Dorsolateral prefrontal cortex (tissue), 120 donors: ENCODE measurements at regions of chr5 and their contacts with region 1.

Region 1: DNA sequence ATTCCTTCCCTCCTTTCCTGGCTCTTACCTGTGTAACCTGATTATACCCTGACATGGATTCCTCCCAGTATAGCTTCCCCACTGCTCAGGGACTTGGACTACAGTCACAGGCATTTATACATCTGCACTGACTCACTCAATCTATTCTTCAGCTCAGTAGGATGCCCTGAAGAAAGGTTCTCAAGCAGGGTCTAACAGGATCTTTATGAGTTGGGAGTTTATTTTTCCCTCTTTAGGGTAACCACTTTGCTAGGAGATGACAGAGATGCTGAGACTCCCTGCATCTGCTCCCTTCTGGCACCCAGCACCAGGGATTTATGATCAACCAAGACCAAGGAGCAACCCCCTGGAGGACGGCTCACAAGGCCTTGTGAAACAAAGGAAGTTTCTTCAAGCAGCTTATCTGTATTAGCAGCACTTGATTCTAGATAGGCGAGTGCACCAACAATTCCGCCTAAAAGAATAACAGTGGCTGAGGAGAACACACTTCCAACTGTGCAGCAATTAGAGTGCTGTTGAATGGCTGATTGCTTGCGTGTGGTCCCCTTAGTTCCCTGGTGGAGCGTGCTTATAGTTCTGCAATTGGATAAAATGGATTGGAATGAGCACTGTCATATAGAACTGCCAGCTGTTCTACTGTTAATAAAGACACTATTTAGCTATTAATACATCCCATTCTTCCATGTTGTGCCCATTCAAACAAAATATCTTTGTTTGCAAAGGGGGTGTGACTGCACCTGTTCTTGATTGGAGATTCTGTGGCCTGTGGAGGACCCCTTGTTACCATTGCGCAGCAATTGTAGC is 482.6 kb downstream of the ZNF608 start:
- DNase-seq: peak in 3 of 10 donors; percentile 41 to 60 (median 52)
- H3K4me3 ChIP-seq: peak overlapping the region in 4 of 59 donors; percentile 1 to 30 (median 8)
- H3K27ac ChIP-seq: peak overlapping the region in 58 of 59 donors; percentile 80 to 97 (median 92)
- H3K27me3 ChIP-seq: no peaks in the 10 kb centered on the region
- CTCF ChIP-seq: peak in 5 of 56 donors; percentile 5 to 30 (median 12)

Region 2: DNA sequence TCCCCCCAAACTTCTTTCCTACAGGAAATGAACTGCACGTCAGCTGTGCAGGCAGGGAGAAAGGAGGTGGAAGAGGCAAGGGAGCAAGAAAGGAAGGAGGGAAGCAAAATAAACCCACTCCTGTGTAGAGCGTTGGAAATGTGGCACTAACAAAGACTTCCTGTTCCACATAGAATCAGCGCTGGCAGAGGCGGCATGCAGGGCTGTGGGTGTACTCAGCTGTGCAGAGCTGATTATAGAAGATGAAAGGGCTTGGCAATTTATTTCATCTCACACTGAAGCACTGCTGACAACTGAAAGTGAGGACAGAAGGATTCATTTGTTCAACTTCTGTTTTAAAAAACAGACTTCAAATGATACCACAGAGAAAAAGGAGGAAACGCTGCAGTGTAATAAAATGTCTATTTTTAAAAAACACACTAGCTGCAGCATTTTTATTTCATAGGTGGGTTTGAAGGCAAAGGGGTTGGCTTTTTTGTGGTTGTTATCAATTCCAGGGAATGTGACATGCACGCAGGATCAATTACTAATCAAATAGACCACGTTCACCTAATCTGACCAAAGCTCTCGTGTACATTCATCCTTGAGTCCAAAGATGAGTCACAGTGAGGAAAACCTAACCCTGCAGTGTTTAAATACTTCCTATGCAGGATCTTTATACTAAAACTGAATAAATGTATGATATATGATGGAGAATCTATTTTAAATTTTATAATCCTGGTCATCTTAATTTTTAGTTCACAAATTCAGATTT is 100.9 kb before region 1 on chr5:
- intact Hi-C with region 1: no loop called
- DNase-seq: peak; percentile 33 to 92 (median 86)
- H3K4me3 ChIP-seq: peak overlapping the region in 49 of 59 donors; percentile 0 to 55 (median 30)
- H3K27ac ChIP-seq: peak overlapping the region; percentile 53 to 95 (median 89)
- H3K27me3 ChIP-seq: no peaks in the 10 kb centered on the region
- CTCF ChIP-seq: peak in 5 of 56 donors; percentile 5 to 20 (median 12)

Region 3: DNA sequence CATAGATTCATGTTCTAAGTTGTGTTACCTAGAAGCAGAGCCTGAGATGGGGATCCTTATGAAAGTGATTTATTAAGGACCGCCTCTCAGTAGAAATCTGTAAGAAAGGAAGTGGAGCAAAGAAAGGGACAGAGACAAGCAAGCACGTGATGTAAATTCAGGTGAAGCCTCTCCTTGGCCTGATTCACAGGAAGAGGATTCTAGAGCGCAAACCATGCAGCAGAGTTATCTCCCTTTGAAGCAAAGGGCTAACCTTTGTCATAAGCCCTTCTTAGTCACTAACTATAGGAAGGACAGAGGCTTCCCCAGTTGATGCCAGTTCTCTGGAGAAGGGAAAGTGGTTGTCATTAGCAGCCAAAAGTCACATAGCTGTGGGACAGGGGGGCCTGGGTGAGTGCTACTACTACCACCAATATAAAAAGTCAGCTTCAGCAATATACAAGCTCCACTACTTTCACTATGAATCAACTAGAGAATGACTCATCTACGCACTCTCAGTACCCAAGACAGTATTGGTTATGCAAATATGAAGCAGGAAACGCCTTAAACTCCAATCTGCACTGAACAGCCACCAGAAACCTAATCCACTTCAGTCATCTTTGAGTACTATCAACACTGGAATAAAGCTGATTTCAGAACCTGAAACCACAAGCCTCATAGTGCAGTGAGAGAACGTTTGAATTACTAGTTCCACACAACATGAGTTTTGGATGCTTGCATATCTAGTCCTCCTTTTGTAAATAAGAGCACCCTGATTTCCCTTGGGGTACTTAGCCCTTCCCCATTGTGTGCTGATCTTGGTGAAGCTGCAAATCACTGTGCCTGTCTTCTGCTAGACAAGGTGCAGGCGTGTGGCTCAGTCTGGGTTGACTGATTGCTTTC is 319.8 kb after region 1 on chr5:
- intact Hi-C with region 1: loop called in 1 of 2 experiments (anchors 10 kb)
- DNase-seq: no peak
- H3K4me3 ChIP-seq: no peak overlapping the region
- H3K27ac ChIP-seq: peak overlapping the region in 1 of 59 donors; percentile 14
- H3K27me3 ChIP-seq: no peaks in the 10 kb centered on the region
- CTCF ChIP-seq: no peak